H1 (cell line): ENCODE measurements at regions of chr1 and their contacts with region 1.

Region 1: DNA sequence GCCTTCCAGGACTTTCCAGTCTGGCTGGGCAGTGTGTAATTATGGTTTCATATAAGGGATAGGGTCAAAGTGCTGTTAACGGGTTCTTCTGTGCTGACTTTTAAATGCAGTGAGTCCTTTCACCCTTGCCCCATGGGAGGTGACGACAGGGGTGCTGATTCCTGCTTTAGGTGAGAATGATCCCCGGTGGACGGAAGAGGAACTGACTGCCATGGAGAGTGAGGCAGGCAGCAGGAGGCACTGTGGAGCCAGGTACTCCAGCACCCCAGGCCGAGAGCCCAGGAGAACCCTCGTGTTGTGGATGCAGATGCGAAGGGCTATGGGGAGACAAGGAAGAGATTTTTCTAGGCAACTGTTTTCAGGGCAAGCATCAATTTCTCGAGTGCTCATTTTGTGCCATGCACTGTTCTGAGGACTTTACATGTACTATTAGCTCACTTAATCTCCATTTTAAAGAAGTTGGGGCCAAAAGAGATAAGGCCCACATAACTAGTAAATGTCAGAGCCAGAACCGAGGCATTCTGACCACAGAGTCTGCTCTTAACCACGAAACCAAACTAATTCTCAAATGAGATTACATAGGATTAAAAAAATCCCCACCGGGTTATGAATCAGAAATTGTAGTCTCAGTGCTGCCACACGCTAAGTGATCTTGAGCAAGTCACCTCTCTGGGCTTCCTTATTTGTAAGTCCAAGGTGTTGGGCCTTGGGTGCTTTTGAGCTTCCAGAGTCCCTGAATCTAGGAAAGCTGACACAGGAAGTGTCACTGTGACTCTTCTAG is 28.2 kb downstream of the STPG1 start:
- DNase-seq: peak; percentile 47 to 77
- H3K4me3 ChIP-seq: no peak overlapping the region
- H3K27ac ChIP-seq: no peak overlapping the region
- H3K4me1 ChIP-seq: no peaks in the 10 kb centered on the region
- H3K27me3 ChIP-seq: no peaks in the 10 kb centered on the region
- CTCF ChIP-seq: peak; percentile 100
- EP300 ChIP-seq: no peak
- POLR2A ChIP-seq: no peak
- RAD21 ChIP-seq: peak; percentile 75 to 83

Region 2: DNA sequence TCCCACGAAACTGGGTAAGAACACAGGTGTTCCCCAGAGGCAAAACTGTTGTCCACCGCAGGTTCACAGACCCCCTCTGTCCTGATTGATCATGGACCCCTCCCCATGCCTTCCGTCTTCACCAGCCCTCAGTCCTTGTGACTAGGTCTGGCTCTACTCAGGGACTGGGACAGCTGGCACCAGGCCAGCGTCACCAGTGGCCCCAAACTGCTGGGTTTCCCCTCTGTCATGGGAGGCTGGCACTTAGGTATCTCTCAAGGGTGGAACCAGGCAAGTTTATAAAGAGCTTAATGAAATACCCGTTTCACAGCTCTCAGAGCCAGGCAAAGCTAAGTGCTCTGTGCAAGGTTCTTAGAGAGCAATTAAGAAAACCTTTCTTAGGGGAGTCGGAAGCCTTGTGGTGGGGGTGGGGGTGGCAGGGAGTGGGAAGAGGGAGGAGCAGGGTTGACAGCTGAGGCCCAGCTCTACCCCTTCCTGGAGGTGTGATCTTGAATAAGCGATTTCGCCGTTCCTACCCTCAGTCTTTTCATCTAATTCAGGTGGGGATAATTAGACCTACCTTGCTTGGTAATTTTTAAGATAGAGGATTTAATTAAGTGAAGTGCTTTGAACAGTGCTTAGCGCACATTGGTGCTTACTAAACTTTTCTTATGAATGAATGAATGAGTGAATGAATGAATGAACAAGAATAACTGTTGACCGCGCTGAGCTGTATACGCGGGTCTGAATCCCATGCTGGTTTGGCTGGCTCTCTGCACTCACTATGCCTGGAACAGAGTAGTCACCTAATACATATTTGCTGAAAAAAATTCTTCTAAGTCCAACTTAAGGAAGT is 163.1 kb before region 1 on chr1:
- CTCF ChIA-PET with region 1: interaction called, 15 read pairs
- POLR2A ChIA-PET with region 1: no interaction called
- DNase-seq: no peak
- H3K4me3 ChIP-seq: no peak overlapping the region
- H3K27ac ChIP-seq: no peak overlapping the region
- H3K4me1 ChIP-seq: no peaks in the 10 kb centered on the region; a peak in 1 of 7 replicates
- H3K27me3 ChIP-seq: no peaks in the 10 kb centered on the region; a peak in 1 of 7 replicates
- CTCF ChIP-seq: no peak
- EP300 ChIP-seq: no peak
- POLR2A ChIP-seq: no peak
- RAD21 ChIP-seq: no peak

Region 3: DNA sequence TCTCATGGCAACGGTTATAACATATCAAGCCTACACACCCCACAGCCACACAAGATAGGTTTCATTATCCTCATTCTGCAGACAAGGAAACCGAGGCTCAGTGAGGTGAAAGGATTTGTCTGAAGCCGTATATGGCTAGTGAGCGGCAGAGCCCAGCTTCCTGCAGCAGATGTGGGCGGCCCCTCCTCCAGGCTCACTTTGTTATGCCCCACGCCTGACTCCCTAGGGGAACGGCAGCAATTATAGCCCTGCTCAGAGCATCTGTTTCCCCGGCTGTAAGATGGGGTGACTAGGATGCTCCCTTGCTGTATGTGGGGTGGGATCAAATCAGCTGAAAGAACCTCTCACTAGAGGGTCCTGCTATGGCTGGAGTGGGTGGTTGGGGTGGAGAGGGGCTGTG is 44.1 kb before region 1 on chr1:
- CTCF ChIA-PET with region 1: interaction called, 20 read pairs
- POLR2A ChIA-PET with region 1: no interaction called
- DNase-seq: no peak
- H3K4me3 ChIP-seq: no peak overlapping the region
- H3K27ac ChIP-seq: no peak overlapping the region
- H3K4me1 ChIP-seq: peaks cover 0 to 36% (median 24%) of the 10 kb centered on the region in 4 experiments; a peak in 6 of 7 replicates
- H3K27me3 ChIP-seq: no peaks in the 10 kb centered on the region
- CTCF ChIP-seq: no peak
- EP300 ChIP-seq: no peak
- POLR2A ChIP-seq: no peak
- RAD21 ChIP-seq: no peak

Region 4: GRCh38 chr1:24364975-24365678 is 20.2 kb before region 1 on chr1:
- CTCF ChIA-PET with region 1: interaction called, 51 read pairs
- POLR2A ChIA-PET with region 1: no interaction called
- DNase-seq: no peak
- H3K4me3 ChIP-seq: no peak overlapping the region
- H3K27ac ChIP-seq: no peak overlapping the region
- H3K4me1 ChIP-seq: no peaks in the 10 kb centered on the region; a peak in 2 of 7 replicates
- H3K27me3 ChIP-seq: no peaks in the 10 kb centered on the region
- CTCF ChIP-seq: no peak
- EP300 ChIP-seq: no peak
- POLR2A ChIP-seq: no peak
- RAD21 ChIP-seq: no peak

Region 5: GRCh38 chr1:24415334-24415909 is 30.1 kb after region 1 on chr1 and contains the start of gene NIPAL3:
- CTCF ChIA-PET with region 1: interaction called, 11 read pairs
- POLR2A ChIA-PET with region 1: no interaction called
- DNase-seq: peak; percentile 95 to 100
- H3K4me3 ChIP-seq: peak within 1 kb of the TSS; percentile 50 to 89 (median 76)
- H3K27ac ChIP-seq: no peak within 1 kb of the TSS
- H3K4me1 ChIP-seq: peaks cover 0 to 6% (median under 1%) of the 10 kb centered on the region in 4 experiments; a peak in 3 of 7 replicates
- H3K27me3 ChIP-seq: no peaks in the 10 kb centered on the region
- CTCF ChIP-seq: peak; percentile 83 to 93 (median 85)
- EP300 ChIP-seq: no peak
- POLR2A ChIP-seq: no peak
- RAD21 ChIP-seq: peak; percentile 67 to 71
- total RNA-seq, gene NIPAL3: 11.0 and 12.6 TPM in 2 replicates

Region 6: DNA sequence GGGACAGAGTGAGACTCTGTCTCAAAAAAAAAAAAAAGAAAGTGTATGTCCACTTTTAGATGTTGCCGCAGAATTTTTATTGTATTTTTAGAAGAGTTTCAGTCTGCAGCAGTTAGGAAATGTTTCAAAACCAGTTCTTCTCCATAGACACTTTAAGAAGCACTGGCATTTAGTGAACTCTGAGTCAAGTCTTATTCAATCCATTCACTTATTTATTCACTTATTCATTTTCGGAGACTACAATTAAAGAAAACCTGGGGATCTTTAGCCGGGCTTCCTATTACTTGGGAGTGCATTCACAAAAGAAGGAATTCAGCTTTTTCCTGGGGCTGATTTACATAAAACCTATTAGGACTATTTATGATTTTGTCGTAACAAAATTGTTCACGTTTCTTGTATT is 129.6 kb after region 1 on chr1:
- CTCF ChIA-PET with region 1: no interaction called
- POLR2A ChIA-PET with region 1: no interaction called
- DNase-seq: no peak
- H3K4me3 ChIP-seq: no peak overlapping the region
- H3K27ac ChIP-seq: no peak overlapping the region
- H3K4me1 ChIP-seq: no peaks in the 10 kb centered on the region; a peak in 1 of 7 replicates
- H3K27me3 ChIP-seq: no peaks in the 10 kb centered on the region
- CTCF ChIP-seq: no peak
- EP300 ChIP-seq: no peak
- POLR2A ChIP-seq: no peak
- RAD21 ChIP-seq: no peak